Cardiac septum (tissue), 1 donor: ENCODE measurements at regions of chrX and their contacts with region 1.

Region 1: DNA sequence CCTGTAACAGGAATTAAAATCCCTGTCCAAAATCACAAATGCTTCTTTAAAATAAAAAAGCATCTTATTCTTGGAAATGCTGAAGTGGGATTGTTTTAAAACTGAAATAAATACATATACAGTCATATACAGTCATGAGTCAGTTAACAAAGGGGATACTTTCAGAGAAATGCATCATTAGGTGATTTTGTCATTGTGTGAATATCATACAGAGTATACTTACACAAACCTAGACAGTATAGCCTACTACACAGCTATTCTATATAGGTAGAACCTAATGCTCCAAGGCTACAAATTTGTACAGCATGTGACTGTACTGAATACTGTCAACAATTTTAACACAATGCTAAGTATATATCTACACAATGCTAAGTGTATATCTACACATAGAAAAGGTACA is 104.3 kb downstream of the BRWD3 start:
- DNase-seq: no peak

Region 2: GRCh38 chrX:80765186-80765585 is 59.8 kb after region 1 on chrX:
- intact Hi-C with region 1: loop called (anchors 10 kb)
- DNase-seq: no peak

Region 3: GRCh38 chrX:81054904-81055303 is 349.5 kb after region 1 on chrX:
- intact Hi-C with region 1: no loop called
- DNase-seq: no peak

Region 4: GRCh38 chrX:81110286-81110685 is 404.9 kb after region 1 on chrX:
- intact Hi-C with region 1: no loop called
- DNase-seq: no peak